ENCODE measurements at regions of chr6 and their contacts with region 1.

Region 1: DNA sequence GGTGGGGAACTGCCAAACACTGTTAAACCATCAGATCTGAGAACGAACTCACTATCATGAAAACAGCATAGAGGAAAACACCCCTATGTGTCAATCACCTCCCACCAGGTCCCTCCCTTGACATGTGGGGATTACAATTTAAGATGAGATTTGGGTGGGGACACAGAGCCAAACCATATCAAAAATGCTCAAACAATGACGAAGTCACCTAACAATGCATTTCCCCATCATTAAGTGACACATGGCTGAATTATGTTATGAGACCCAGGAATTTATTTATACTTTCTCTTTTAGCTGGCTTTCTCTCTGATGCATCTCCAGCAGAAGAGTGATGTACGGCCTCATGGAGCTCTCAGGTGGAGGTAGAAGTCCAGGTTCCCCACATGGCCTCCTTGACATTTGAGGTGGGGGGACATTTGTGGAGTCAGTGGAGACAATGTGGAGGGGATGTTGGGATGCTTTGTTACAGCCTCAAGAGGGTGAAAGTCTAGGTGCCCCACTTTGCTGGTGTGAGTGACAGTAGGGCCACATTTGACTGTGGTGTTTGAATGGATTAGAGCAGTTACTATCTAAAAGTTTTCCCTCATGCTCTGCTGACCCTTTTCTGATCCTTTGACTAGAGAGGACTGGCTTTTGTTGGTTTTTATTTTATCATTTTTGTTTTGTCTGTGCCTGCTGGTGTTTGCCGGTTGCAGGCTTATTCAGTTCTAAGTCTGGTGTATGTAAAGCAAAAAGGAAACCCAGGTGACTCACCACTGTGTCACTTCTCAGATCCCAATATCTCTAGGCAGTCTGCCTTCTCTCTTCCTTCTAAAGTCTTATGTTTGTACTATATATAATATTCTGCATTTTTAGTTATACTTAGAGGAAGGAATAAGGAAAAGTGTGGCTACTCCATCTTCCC is 18.5 kb upstream of the DCBLD1 start:
- DNase-seq: no peak
- H3K4me3 ChIP-seq: no peak overlapping the region
- CTCF ChIP-seq: no peak

Region 2: DNA sequence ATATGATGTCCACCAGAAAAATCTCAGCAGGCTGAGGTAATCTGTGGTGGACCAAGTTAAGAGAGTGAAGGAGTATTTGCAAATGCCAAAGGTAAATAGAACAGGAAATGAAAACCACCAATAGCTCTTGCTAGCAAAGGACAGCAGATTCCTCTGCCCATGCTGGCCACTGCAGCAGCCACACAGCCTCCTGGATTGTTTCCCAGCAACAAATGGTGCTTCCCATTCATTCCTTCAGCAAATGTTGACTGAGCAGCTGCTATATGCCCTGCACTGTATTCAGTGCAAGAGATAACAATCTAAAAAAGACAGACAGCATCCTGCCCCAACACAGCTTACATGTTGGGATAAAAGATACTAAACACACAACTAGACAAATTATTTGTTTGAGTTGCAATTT is 49.2 kb before region 1 on chr6:
- in situ Hi-C with region 1: no loop called
- DNase-seq: peak; percentile 47
- H3K4me3 ChIP-seq: no peak overlapping the region
- CTCF ChIP-seq: no peak

Region 3: DNA sequence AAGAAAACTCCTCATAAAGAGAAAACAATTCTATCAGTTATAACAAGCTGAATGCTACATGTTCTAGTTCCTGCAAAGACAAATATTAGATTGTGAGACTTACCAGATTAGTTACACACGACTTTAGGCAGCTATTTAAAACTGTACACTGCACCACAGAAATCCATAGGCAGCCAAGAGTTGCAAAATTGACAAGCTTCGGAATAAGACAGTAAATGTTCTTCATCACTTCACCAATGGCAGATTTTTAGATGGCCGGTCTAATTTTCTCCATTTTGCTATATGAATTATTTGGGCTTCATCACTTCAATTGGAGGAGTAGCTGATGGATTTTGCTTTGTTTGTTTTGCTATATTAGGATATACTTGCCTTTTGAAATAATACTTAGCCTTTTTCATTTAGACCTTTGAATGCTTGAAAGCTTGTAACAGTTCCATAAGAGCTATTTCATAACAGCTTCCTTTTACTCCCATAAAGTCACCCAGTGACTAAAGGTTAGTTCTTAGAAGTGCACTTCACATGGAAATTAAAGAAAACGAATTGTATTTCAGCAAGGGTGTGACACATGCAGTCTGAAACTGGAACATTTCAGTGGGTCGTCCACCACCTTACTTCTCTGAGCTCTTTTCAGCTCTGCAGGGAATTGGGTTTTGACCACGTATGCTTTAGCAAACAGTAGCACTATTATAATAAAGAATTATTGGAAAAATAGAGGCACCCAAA is 38.4 kb before region 1 on chr6 and contains the start of gene ROS1:
- in situ Hi-C with region 1: no loop called
- DNase-seq: no peak
- H3K4me3 ChIP-seq: no peak within 1 kb of the TSS
- CTCF ChIP-seq: no peak

Region 4: GRCh38 chr6:117547688-117548621 is 83.9 kb after region 1 on chr6:
- in situ Hi-C with region 1: loop called (anchors 10 kb)
- DNase-seq: no peak
- H3K4me3 ChIP-seq: peak overlapping the region; percentile 31
- CTCF ChIP-seq: peak; percentile 18

Measured in astrocyte of the cerebellum (primary cell).